ENCODE measurements at regions of chr10 and their contacts with region 1.

Region 1: GRCh38 chr10:86710987-86711512 is 42.7 kb downstream of the LDB3 start:
- DNase-seq: peak; percentile 97
- H3K4me3 ChIP-seq: peak overlapping the region; percentile 61 to 64
- H3K27ac ChIP-seq: peak overlapping the region; percentile 65 to 75
- H3K4me1 ChIP-seq: peaks cover 10 to 11% of the 10 kb centered on the region in 2 experiments; a peak in 2 of 4 replicates
- H3K27me3 ChIP-seq: no peaks in the 10 kb centered on the region
- CTCF ChIP-seq: peak; percentile 72
- EP300 ChIP-seq: no peak; a peak in 1 of 4 replicates
- RAD21 ChIP-seq: peak; percentile 68

Region 2: DNA sequence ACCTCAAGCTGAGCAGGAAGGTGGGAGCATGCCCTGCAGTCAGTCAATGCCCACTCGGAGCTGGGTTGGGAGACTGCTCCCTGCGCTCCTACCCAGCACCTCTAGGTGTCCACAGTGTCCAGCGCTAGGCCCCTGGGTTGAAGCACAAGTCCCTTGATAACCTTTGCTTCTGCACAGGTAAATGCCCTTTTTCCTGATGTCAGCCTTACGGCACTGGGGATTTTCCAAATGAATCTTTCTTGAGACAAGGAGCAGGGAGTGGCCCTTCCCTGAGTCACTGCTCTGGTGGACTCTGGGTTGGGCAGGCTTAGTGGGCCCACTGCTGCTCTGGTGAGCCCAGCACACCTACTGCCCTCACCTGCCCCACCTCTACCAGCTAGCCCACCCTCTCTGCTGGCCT is 118.6 kb before region 1 on chr10:
- CTCF ChIA-PET with region 1: no interaction called
- POLR2A ChIA-PET with region 1: no interaction called
- DNase-seq: no peak
- H3K4me3 ChIP-seq: no peak overlapping the region
- H3K27ac ChIP-seq: no peak overlapping the region
- H3K4me1 ChIP-seq: no peaks in the 10 kb centered on the region
- H3K27me3 ChIP-seq: no peaks in the 10 kb centered on the region
- CTCF ChIP-seq: no peak; the same call in 1 of the 2 replicates
- EP300 ChIP-seq: no peak
- RAD21 ChIP-seq: peak; percentile 47

Region 3: DNA sequence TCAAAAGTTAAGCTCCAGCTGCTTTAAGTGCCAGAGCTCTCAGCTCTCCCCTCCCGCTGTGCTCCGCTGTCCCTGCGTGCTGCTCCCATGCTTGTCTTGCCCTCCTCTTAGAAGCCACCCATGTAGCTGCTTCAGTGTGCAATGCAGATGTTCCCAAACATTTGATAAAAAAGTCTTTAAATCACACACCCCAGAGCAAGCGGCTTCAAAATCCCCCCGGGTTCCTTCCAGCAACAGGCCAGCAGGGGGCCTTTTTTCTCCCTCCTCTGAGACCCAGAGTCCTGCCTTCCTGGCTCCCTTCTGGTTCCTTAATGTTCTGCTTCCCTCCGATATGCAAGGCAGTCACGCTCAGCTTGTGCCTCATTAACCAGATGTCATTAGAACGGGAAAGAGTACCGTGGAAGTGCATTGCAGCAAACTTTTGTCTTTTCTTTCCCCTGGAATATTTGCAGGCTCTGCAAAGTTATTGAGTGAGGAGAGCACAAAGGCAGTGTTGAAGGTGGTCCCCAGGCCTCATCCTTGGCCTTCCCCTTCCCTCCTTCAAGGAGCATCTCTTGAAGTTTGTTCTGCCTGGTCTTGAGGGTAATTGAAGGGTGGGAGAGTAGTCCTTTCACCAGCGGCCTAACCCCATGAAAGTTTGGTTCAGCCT is 17.2 kb before region 1 on chr10:
- CTCF ChIA-PET with region 1: interaction called, 15 read pairs
- POLR2A ChIA-PET with region 1: no interaction called
- DNase-seq: peak; percentile 75
- H3K4me3 ChIP-seq: no peak overlapping the region
- H3K27ac ChIP-seq: no peak overlapping the region
- H3K4me1 ChIP-seq: peaks cover 0 to 6% of the 10 kb centered on the region in 2 experiments; a peak in 1 of 4 replicates
- H3K27me3 ChIP-seq: no peaks in the 10 kb centered on the region
- CTCF ChIP-seq: peak; percentile 75
- EP300 ChIP-seq: no peak
- RAD21 ChIP-seq: peak; percentile 64

Region 4: GRCh38 chr10:86755740-86756510 is 44.9 kb after region 1 on chr10:
- CTCF ChIA-PET with region 1: interaction called, 3 read pairs
- POLR2A ChIA-PET with region 1: interaction called, 18 read pairs
- DNase-seq: peak; percentile 99
- H3K4me3 ChIP-seq: peak overlapping the region; percentile 73 to 83
- H3K27ac ChIP-seq: peak overlapping the region; percentile 98
- H3K4me1 ChIP-seq: peaks cover 12 to 23% of the 10 kb centered on the region in 2 experiments; a peak in 3 of 4 replicates
- H3K27me3 ChIP-seq: no peaks in the 10 kb centered on the region
- CTCF ChIP-seq: no peak
- EP300 ChIP-seq: no peak
- RAD21 ChIP-seq: peak; percentile 24; the same call in 1 of the 2 replicates

Region 5: DNA sequence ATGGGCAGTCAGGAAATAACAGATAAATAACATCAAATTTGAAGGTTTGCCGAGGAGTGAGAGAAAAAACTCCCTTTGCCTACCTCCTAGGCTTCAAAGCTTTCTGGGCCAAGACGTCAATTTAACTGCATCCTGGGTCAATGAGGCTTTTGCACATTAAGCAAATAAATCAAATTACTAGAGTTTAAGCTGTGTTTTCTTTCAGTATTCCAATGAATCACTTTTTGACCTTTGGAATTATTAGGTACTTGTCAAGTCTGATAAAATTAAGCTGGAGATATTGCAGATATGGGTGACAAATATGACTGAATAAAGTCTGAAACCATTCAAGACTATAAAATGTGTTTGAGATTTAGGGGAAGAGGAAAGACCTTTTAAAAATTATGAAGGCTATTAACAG is 361.4 kb after region 1 on chr10:
- CTCF ChIA-PET with region 1: no interaction called
- POLR2A ChIA-PET with region 1: no interaction called
- DNase-seq: no peak
- H3K4me3 ChIP-seq: no peak overlapping the region
- H3K27ac ChIP-seq: no peak overlapping the region; a peak in 2 of 4 replicates
- H3K4me1 ChIP-seq: peaks cover 0 to 2% of the 10 kb centered on the region in 2 experiments; a peak in 2 of 4 replicates
- H3K27me3 ChIP-seq: no peaks in the 10 kb centered on the region
- CTCF ChIP-seq: no peak
- EP300 ChIP-seq: no peak
- RAD21 ChIP-seq: no peak